ENCODE measurements at regions of chr17 and their contacts with region 1.

Region 1: GRCh38 chr17:27601069-27601975 is 29.7 kb upstream of the LGALS9 start:
- DNase-seq: peak; percentile 82
- H3K4me3 Mint-ChIP-seq: no peak overlapping the region
- H3K27ac Mint-ChIP-seq: no peak overlapping the region
- H3K4me1 Mint-ChIP-seq: peaks cover 11% of the 10 kb centered on the region
- H3K27me3 Mint-ChIP-seq: no peaks in the 10 kb centered on the region

Region 2: GRCh38 chr17:27353461-27354050 is 247.8 kb before region 1 on chr17:
- CTCF ChIA-PET with region 1: interaction called, 51 read pairs
- POLR2A ChIA-PET with region 1: interaction called, 3 read pairs
- DNase-seq: peak; percentile 90
- H3K4me3 Mint-ChIP-seq: peak overlapping the region; percentile 84
- H3K27ac Mint-ChIP-seq: peak overlapping the region; percentile 81
- H3K4me1 Mint-ChIP-seq: peaks cover 38% of the 10 kb centered on the region
- H3K27me3 Mint-ChIP-seq: no peaks in the 10 kb centered on the region

Region 3: DNA sequence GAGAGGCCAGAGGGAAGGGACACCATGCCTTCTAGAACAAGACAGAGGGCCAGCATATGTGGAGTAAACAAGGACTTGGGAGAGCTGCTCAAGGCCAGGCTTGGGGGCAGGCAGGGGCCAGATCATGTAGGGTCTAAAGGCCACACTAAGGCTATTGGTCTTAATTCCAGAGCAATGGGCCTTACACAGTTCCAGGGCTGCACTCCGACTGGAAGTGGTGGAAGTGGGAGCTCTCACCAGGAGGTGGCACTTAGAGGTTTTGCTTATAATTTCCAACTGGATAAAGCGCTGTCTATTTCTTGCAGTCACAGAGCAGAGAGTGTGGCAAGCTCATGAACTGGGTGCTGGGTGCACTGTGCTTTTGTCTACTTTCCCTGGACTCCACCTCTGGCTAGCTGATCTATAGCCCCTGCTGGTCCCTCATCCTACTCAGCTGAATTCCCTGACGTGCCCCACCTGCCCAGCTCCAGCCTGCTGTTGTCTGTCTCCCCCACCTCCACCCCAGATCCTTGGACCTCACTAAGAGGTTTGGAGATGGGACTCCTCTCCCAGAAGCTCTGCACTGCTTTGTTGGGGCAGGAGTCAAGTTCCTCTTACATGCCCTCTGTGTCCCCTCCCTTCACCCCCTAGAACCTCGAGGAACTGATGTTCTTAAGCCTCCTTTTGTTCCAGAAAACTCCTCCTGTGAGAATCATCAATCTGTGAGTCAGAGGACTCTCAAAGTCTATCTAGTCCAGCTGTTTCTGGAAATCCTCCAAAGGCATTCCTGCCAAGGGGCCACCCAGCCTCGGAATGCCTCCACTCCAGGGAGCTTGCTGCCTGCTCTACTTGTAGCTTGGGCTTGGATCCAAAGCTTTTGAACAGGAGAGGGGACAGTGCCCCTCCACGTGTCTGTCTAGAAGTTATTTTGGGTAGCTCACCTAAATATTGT is 193.1 kb before region 1 on chr17:
- CTCF ChIA-PET with region 1: interaction called, 17 read pairs
- POLR2A ChIA-PET with region 1: no interaction called
- DNase-seq: no peak
- H3K4me3 Mint-ChIP-seq: no peak overlapping the region
- H3K27ac Mint-ChIP-seq: no peak overlapping the region
- H3K4me1 Mint-ChIP-seq: no peaks in the 10 kb centered on the region
- H3K27me3 Mint-ChIP-seq: peaks cover 4% of the 10 kb centered on the region

Region 4: GRCh38 chr17:27466743-27467375 is 134.5 kb before region 1 on chr17:
- CTCF ChIA-PET with region 1: interaction called, 13 read pairs
- POLR2A ChIA-PET with region 1: no interaction called
- DNase-seq: peak; percentile 85
- H3K4me3 Mint-ChIP-seq: peak overlapping the region; percentile 61
- H3K27ac Mint-ChIP-seq: peak overlapping the region; percentile 89
- H3K4me1 Mint-ChIP-seq: peaks cover 86% of the 10 kb centered on the region
- H3K27me3 Mint-ChIP-seq: no peaks in the 10 kb centered on the region

Region 5: DNA sequence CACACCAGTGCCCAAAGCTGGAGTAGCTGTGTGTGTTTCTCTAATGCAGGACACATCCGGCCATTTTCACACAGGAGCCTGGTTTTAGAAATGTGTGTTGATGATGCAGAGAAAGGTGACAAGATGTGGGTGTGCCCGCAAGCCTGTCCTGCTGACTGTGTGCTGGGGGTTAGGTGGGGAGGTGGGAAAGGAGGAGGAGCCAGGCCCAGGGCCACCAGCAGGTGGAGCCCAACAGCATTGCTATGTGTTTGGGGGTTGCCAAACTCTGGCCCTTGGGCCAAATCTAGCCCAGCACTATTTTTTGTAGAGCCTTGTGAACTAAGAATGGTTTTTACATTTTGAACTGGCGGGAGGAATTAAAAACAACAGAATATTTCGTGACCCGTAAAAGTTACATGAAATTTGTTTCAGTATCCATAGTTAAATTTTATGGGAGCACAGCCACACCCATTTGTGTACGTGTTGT is 32.0 kb before region 1 on chr17:
- CTCF ChIA-PET with region 1: interaction called, 12 read pairs
- POLR2A ChIA-PET with region 1: no interaction called
- DNase-seq: peak; percentile 62
- H3K4me3 Mint-ChIP-seq: no peak overlapping the region
- H3K27ac Mint-ChIP-seq: peak overlapping the region; percentile 1
- H3K4me1 Mint-ChIP-seq: peaks cover 68% of the 10 kb centered on the region
- H3K27me3 Mint-ChIP-seq: no peaks in the 10 kb centered on the region

Region 6: DNA sequence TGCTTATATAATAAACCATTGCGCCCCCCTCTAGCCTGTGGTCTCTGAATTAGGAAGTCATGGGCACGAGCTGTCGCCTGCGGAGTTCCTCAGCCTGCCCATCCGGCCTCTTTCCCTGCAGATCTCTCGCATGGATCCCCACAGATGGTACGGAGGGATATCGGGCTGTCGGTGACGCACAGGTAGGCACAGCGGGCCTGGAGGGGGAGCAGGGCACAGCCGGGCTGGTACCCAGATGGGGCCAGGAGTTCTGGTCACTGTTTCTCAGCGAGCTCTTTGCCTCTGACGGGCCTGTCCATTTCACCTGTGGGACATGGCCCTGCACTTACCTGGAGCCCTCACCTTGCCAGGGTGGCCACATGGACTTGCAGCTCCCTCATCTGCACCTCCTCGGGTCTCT is 13.0 kb before region 1 on chr17:
- CTCF ChIA-PET with region 1: interaction called, 27 read pairs
- POLR2A ChIA-PET with region 1: interaction called, 3 read pairs
- DNase-seq: no peak
- H3K4me3 Mint-ChIP-seq: no peak overlapping the region
- H3K27ac Mint-ChIP-seq: no peak overlapping the region
- H3K4me1 Mint-ChIP-seq: no peaks in the 10 kb centered on the region
- H3K27me3 Mint-ChIP-seq: no peaks in the 10 kb centered on the region

Measured in activated CD4-positive, alpha-beta memory T cell treated with anti-CD3 and anti-CD28 coated beads, Interleukin-2, amount 10 ng/mL, durations not matched to agents 7 days and 5 days (primary cell).